ENCODE measurements at regions of chr3 and their contacts with region 1.

Region 1: GRCh38 chr3:50436114-50436674 is 67.2 kb downstream of the CACNA2D2 start:
- DNase-seq: peak; percentile 50 to 95
- H3K4me3 ChIP-seq: no peak overlapping the region
- H3K27ac ChIP-seq: no peak overlapping the region
- H3K4me1 ChIP-seq: peaks cover 0 to 4% (median 1%) of the 10 kb centered on the region in 4 experiments; a peak in 3 of 7 replicates
- H3K27me3 ChIP-seq: no peaks in the 10 kb centered on the region
- CTCF ChIP-seq: peak in 2 of 3 experiments; percentile 92 to 95; a peak in 3 of 4 replicates
- EP300 ChIP-seq: no peak
- POLR2A ChIP-seq: no peak
- RAD21 ChIP-seq: peak; percentile 93 to 94

Region 2: DNA sequence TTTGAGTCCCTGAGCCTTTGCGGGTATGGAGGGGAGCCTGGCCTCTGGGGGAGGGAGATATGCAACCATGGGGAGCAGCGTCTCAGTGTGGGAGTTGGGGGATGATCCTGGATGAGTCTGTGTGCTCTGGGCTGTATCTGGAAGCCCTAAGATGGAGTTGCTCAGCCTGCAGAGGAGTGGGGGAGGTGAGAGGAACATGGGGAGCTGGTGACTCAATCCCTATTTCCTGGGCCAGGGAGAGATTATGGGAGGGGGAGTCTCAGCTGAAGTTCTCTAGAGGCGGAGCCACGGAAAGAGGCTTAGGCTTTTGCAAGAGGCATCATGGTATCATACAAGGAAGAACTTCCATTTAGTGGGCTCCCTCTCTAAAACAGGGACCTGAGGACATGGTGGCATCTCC is 17.3 kb before region 1 on chr3:
- CTCF ChIA-PET with region 1: interaction called, 38 read pairs
- POLR2A ChIA-PET with region 1: no interaction called
- DNase-seq: no peak
- H3K4me3 ChIP-seq: no peak overlapping the region
- H3K27ac ChIP-seq: no peak overlapping the region
- H3K4me1 ChIP-seq: peaks cover 0 to 2% (median 0%) of the 10 kb centered on the region in 4 experiments; a peak in 1 of 7 replicates
- H3K27me3 ChIP-seq: no peaks in the 10 kb centered on the region; a peak in 1 of 7 replicates
- CTCF ChIP-seq: no peak
- EP300 ChIP-seq: no peak
- POLR2A ChIP-seq: no peak
- RAD21 ChIP-seq: no peak

Region 3: DNA sequence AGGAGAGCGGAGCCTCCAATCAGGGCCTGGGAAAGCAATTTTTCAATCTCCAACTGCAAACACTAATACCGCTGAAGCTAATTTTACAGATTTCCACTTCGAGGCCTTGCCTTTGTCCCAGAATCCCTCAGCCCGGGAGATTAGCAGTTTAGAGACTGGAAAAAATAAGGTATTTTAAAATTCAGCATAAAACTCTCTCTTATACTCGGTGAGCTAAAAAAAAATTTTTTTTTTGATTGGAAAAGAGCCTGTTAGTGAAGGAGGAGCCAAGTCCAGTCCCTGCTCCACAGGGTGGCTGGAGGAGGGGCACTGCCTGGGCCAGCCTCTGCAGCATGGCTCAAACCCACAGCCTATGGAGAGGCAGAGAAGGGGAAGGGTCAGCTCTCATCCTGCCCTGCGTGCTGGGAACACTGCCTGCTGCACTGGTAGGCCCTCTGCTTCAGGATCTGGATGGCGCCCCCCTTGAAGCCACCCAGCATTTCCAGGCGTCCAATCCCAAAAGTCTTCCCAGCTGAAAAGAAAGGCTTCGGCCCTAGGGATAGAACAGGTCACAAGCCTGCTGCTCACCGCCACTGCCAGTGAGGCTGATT is 18.4 kb after region 1 on chr3:
- CTCF ChIA-PET with region 1: interaction called, 41 read pairs
- POLR2A ChIA-PET with region 1: no interaction called
- DNase-seq: peak in 1 of 2 experiments; percentile 67
- H3K4me3 ChIP-seq: no peak overlapping the region
- H3K27ac ChIP-seq: no peak overlapping the region
- H3K4me1 ChIP-seq: peaks cover 0 to 31% (median 18%) of the 10 kb centered on the region in 4 experiments; a peak in 6 of 7 replicates
- H3K27me3 ChIP-seq: no peaks in the 10 kb centered on the region
- CTCF ChIP-seq: no peak
- EP300 ChIP-seq: no peak
- POLR2A ChIP-seq: no peak
- RAD21 ChIP-seq: no peak

Region 4: GRCh38 chr3:50474717-50475116 is 38.5 kb after region 1 on chr3:
- CTCF ChIA-PET with region 1: interaction called, 34 read pairs
- POLR2A ChIA-PET with region 1: no interaction called
- DNase-seq: no peak
- H3K4me3 ChIP-seq: no peak overlapping the region
- H3K27ac ChIP-seq: no peak overlapping the region
- H3K4me1 ChIP-seq: peaks cover 0 to 8% (median under 1%) of the 10 kb centered on the region in 4 experiments; a peak in 5 of 7 replicates
- H3K27me3 ChIP-seq: no peaks in the 10 kb centered on the region; a peak in 1 of 7 replicates
- CTCF ChIP-seq: no peak
- EP300 ChIP-seq: no peak
- POLR2A ChIP-seq: no peak
- RAD21 ChIP-seq: no peak

Region 5: GRCh38 chr3:50503504-50504342 is 67.5 kb after region 1 on chr3 and contains the start of gene CACNA2D2:
- CTCF ChIA-PET with region 1: interaction called, 83 read pairs
- POLR2A ChIA-PET with region 1: no interaction called
- DNase-seq: peak in 1 of 2 experiments; percentile 82
- H3K4me3 ChIP-seq: peak within 1 kb of the TSS; percentile 47 to 94 (median 64)
- H3K27ac ChIP-seq: no peak within 1 kb of the TSS
- H3K4me1 ChIP-seq: peaks cover 0 to 15% (median 11%) of the 10 kb centered on the region in 4 experiments; a peak in 6 of 7 replicates
- H3K27me3 ChIP-seq: peaks cover 4 to 42% (median 27%) of the 10 kb centered on the region in 4 experiments
- CTCF ChIP-seq: 0 out of 4 replicates have a peak, but pooled peaks of 1 of the 3 experiments have one; percentile 4
- EP300 ChIP-seq: no peak
- POLR2A ChIP-seq: peak in 1 of 2 experiments; percentile 87; a peak in 2 of 3 replicates
- RAD21 ChIP-seq: peak in 1 of 2 experiments; percentile 19; a peak in 1 of 4 replicates
- total RNA-seq, gene CACNA2D2: 14.0 and 14.1 TPM in 2 replicates

Region 6: DNA sequence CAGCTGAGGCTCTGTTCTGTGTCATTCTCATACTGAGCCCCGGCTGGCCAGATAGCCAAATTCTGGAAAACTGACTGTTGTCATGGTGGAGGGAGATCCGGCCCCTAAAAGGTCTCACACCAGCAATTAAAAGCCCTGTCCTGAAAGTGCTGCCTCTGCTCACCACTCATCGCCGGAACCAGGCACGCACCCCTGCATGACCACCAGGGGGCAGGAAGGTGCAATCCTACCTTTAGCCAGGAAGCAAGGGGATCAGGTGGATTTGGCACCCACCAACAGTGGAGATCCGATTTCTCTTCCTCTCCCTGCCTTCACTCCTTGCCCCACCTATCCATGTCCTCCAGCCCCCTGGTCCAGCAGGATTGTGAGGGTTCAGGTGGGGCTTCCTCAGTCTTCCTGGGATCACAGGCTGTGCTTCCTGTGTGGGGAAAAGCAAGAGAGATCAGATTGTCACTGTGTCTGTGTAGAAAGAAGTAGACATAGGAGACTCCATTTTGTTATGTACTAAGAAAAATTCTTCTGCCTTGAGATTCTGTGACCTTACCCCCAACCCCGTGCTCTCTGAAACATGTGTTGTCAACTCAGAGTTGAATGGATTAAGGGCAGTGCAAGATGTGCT is 83.4 kb after region 1 on chr3:
- CTCF ChIA-PET with region 1: interaction called, 83 read pairs
- POLR2A ChIA-PET with region 1: no interaction called
- DNase-seq: peak; percentile 81 to 95
- H3K4me3 ChIP-seq: no peak overlapping the region
- H3K27ac ChIP-seq: no peak overlapping the region
- H3K4me1 ChIP-seq: peaks cover 3 to 55% (median 42%) of the 10 kb centered on the region in 4 experiments
- H3K27me3 ChIP-seq: no peaks in the 10 kb centered on the region
- CTCF ChIP-seq: peak in 2 of 3 experiments; percentile 95 to 99; a peak in 3 of 4 replicates
- EP300 ChIP-seq: no peak
- POLR2A ChIP-seq: no peak
- RAD21 ChIP-seq: peak; percentile 80 to 86

Region 7: GRCh38 chr3:50525987-50526386 is 89.8 kb after region 1 on chr3:
- CTCF ChIA-PET with region 1: interaction called, 15 read pairs
- POLR2A ChIA-PET with region 1: no interaction called
- DNase-seq: peak in 1 of 2 experiments; percentile 87
- H3K4me3 ChIP-seq: no peak overlapping the region
- H3K27ac ChIP-seq: no peak overlapping the region
- H3K4me1 ChIP-seq: peaks cover 3 to 37% (median 21%) of the 10 kb centered on the region in 4 experiments
- H3K27me3 ChIP-seq: peaks cover 0 to 9% (median 5%) of the 10 kb centered on the region in 4 experiments; a peak in 5 of 7 replicates
- CTCF ChIP-seq: no peak
- EP300 ChIP-seq: no peak
- POLR2A ChIP-seq: no peak
- RAD21 ChIP-seq: 0 out of 4 replicates have a peak, but pooled peaks of 1 of the 2 experiments have one; percentile 8